ENCODE measurements at regions of chr19 and their contacts with region 1.

Region 1: GRCh38 chr19:58499021-58499927 is 12.5 kb downstream of the SLC27A5 start:
- DNase-seq: peak; percentile 100
- H3K4me3 Mint-ChIP-seq: peak overlapping the region; percentile 89
- H3K27ac Mint-ChIP-seq: peak overlapping the region; percentile 80
- H3K4me1 Mint-ChIP-seq: peaks cover 27% of the 10 kb centered on the region
- H3K27me3 Mint-ChIP-seq: no peaks in the 10 kb centered on the region

Region 2: GRCh38 chr19:58466760-58467589 is 32.3 kb before region 1 on chr19 and contains the start of gene ZNF324:
- CTCF ChIA-PET with region 1: no interaction called
- POLR2A ChIA-PET with region 1: no interaction called
- intact Hi-C with region 1: loop called (anchors 2 kb)
- DNase-seq: peak; percentile 99
- H3K4me3 Mint-ChIP-seq: peak within 1 kb of the TSS; percentile 83
- H3K27ac Mint-ChIP-seq: peak within 1 kb of the TSS; percentile 62
- H3K4me1 Mint-ChIP-seq: peaks cover 17% of the 10 kb centered on the region
- H3K27me3 Mint-ChIP-seq: no peaks in the 10 kb centered on the region
- total RNA-seq, gene ZNF324: 7.0 to 8.3 TPM